ENCODE measurements at regions of chr12 and their contacts with region 1.

Region 1: DNA sequence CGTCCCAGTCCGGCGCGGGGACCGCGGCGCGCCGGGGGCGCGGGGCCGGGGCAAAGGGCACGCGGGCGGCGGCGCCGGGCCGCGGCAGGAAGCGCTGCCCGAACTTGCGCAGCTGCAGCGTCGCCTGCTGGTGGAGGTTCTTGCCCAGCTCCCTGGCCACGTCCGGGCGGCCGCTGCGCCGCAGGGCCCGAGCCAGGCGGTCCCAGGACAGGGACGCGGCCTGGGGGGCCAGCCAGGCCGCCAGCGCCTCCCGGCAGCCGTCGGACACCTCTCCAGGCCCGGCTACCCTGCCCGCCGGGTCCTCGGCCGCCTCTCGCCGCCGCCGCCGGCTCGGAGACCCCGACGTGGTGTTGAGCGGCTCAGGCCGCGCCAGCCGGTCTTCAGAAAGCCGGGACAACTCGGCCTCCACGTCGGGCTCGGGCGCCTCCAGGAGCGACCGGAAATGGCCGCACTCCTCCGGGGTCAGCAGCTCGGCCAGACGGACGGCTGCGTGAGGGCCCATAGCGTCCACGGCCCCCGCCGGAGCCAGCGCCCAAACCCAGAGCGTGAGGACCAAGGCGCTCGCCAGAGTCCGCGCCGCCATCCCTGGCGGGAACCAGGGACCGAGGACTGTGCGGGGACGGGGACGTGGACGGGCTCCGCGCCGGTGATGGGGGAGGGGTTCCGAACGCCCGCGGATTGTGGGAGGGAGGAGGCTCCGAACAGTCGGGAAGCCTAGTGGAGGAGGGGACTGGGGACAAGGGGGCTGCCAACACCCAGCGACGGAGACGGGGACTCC is 34.0 kb downstream of the FIGNL2 start:
- DNase-seq: peak; percentile 73 to 88
- ATAC-seq: peak; percentile 77 to 94 (median 86)
- H3K4me3 ChIP-seq: peak overlapping the region; percentile 27 to 72 (median 66)
- H3K27ac ChIP-seq: peak overlapping the region; percentile 59 to 92 (median 88)
- H3K4me1 ChIP-seq: peaks cover 0 to 25% (median 3%) of the 10 kb centered on the region in 9 donors
- H3K27me3 ChIP-seq: peaks cover 0 to 37% (median 12%) of the 10 kb centered on the region in 7 donors
- CTCF ChIP-seq: peak; percentile 40 to 80 (median 58)

Region 2: GRCh38 chr12:51430231-51430906 is 384.1 kb before region 1 on chr12:
- intact Hi-C with region 1: loop called in 2 of 10 experiments (anchors 5 kb)
- DNase-seq: no peak
- ATAC-seq: no peak
- H3K4me3 ChIP-seq: no peak overlapping the region
- H3K27ac ChIP-seq: no peak overlapping the region
- H3K4me1 ChIP-seq: no peaks in the 10 kb centered on the region
- H3K27me3 ChIP-seq: peaks cover 0 to 12% (median 6%) of the 10 kb centered on the region in 7 donors
- CTCF ChIP-seq: no peak

Region 3: GRCh38 chr12:51531978-51532497 is 282.5 kb before region 1 on chr12:
- intact Hi-C with region 1: loop called in 2 of 10 experiments (anchors 5 to 10 kb)
- DNase-seq: peak; percentile 53 to 69
- ATAC-seq: peak; percentile 63 to 88 (median 84)
- H3K4me3 ChIP-seq: no peak overlapping the region
- H3K27ac ChIP-seq: no peak overlapping the region
- H3K4me1 ChIP-seq: no peaks in the 10 kb centered on the region
- H3K27me3 ChIP-seq: peaks cover 0 to 60% (median 44%) of the 10 kb centered on the region in 7 donors
- CTCF ChIP-seq: peak; percentile 75 to 92 (median 85)

Region 4: DNA sequence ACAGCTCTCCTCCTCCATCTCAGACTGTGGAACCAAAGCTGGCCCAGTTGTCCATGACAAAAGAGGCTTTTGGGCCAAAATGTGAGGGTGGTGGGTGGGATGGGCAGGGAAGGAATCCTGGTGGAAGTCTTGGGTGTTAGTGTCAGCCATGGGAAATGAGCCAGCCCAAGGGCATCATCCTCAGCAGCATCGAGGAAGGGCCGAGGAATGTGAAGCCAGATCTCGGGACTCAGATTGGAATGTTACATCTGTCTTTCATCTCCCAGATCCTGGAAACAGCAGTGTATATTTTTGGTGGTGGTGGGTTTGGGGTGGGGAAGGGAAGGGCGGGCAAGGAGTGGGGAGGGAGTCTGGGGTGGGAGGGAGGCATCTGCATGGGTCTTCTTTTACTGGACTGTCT is 180.5 kb after region 1 on chr12:
- intact Hi-C with region 1: no loop called
- DNase-seq: no peak
- ATAC-seq: no peak
- H3K4me3 ChIP-seq: no peak overlapping the region
- H3K27ac ChIP-seq: no peak overlapping the region
- H3K4me1 ChIP-seq: peaks cover 0 to 6% (median 0%) of the 10 kb centered on the region in 9 donors
- H3K27me3 ChIP-seq: no peaks in the 10 kb centered on the region
- CTCF ChIP-seq: no peak